Activated CD8-positive, alpha-beta T cell treated with anti-CD3 and anti-CD28 coated beads, Interleukin-2, amount 10 ng/mL, durations not matched to agents 7 days and 5 days (primary cell): ENCODE measurements at regions of chr12 and their contacts with region 1.

Region 1: GRCh38 chr12:120292661-120293531 is at the start of gene RNU4-1:
- DNase-seq: peak; percentile 88
- ATAC-seq: peak; percentile 50
- H3K4me3 Mint-ChIP-seq: no peak within 1 kb of the TSS
- H3K27ac Mint-ChIP-seq: no peak within 1 kb of the TSS
- H3K4me1 Mint-ChIP-seq: peaks cover 5% of the 10 kb centered on the region
- H3K27me3 Mint-ChIP-seq: no peaks in the 10 kb centered on the region
- total RNA-seq, gene RNU4-1: 1,409 to 2,335 TPM

Region 2: GRCh38 chr12:120012067-120012621 is 280.8 kb before region 1 on chr12:
- CTCF ChIA-PET with region 1: no interaction called
- POLR2A ChIA-PET with region 1: interaction called, 16 read pairs
- DNase-seq: peak; percentile 83
- ATAC-seq: peak; percentile 75
- H3K4me3 Mint-ChIP-seq: peak overlapping the region; percentile 19
- H3K27ac Mint-ChIP-seq: peak overlapping the region; percentile 86
- H3K4me1 Mint-ChIP-seq: peaks cover 85% of the 10 kb centered on the region
- H3K27me3 Mint-ChIP-seq: no peaks in the 10 kb centered on the region

Region 3: GRCh38 chr12:120155072-120155471 is 137.8 kb before region 1 on chr12:
- CTCF ChIA-PET with region 1: no interaction called
- POLR2A ChIA-PET with region 1: no interaction called
- DNase-seq: no peak
- ATAC-seq: no peak
- H3K4me3 Mint-ChIP-seq: no peak overlapping the region
- H3K27ac Mint-ChIP-seq: no peak overlapping the region
- H3K4me1 Mint-ChIP-seq: peaks cover 16% of the 10 kb centered on the region
- H3K27me3 Mint-ChIP-seq: no peaks in the 10 kb centered on the region

Region 4: DNA sequence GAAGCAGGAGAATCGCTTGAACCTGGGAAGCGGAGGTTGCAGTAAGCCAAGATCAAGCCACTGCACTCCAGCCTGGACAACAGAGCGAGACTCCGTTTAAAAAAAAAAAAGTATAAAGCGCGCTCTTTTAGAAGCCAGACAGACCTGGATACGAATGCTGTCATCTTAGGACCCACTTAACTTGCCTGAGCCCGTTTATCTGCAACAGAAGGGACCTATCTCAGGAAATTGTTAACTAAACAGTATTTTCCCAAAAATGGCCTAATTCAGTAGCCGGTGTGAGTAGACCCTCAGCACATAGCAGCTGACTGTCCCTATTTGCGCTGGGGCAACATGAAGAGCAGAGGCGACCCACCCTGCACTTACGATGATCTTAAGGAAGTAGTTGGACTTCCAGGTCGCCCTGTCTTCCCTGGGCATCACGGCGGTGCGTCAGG is 92.5 kb before region 1 on chr12:
- CTCF ChIA-PET with region 1: interaction called, 16 read pairs
- POLR2A ChIA-PET with region 1: interaction called, 164 read pairs
- DNase-seq: no peak
- ATAC-seq: no peak
- H3K4me3 Mint-ChIP-seq: peak overlapping the region; percentile 89
- H3K27ac Mint-ChIP-seq: peak overlapping the region; percentile 98
- H3K4me1 Mint-ChIP-seq: peaks cover 46% of the 10 kb centered on the region
- H3K27me3 Mint-ChIP-seq: no peaks in the 10 kb centered on the region

Region 5: DNA sequence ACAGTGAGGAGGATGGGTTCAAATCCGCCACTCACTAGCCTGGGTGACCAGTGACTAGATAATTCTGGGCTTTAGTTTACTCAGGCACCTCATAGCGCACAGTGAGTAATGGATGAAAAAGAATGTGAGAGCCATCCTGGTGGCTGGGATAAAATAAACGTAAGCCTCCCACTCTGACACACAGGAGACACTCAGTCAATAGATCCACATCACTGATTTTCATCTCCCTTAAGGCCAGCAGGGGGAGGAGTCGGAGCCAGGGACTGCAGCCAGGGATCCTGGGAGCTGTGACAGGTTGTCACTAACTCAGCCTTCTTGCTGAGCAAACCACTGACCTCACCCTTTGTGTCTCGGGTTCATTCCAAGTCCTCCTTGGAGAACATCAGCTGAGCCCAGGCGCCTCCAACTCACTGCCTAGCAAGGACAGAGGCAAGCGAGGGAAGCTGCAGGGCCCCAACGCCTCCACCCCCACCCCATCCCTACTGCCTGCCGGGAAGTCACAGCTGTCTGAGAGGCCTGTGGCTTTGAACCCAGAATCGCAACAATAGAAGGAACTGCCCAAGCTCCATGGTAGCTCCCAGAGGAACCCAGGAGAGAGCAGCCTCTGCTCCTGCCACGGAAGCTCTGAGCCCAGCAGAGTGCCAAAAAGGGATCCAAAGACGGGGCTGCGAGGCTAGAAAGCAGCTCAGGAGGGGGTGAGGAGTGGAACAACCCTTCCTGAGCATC is 58.1 kb before region 1 on chr12:
- CTCF ChIA-PET with region 1: interaction called, 89 read pairs
- POLR2A ChIA-PET with region 1: interaction called, 329 read pairs
- DNase-seq: no peak
- ATAC-seq: no peak
- H3K4me3 Mint-ChIP-seq: no peak overlapping the region
- H3K27ac Mint-ChIP-seq: no peak overlapping the region
- H3K4me1 Mint-ChIP-seq: peaks cover 74% of the 10 kb centered on the region
- H3K27me3 Mint-ChIP-seq: no peaks in the 10 kb centered on the region

Region 6: DNA sequence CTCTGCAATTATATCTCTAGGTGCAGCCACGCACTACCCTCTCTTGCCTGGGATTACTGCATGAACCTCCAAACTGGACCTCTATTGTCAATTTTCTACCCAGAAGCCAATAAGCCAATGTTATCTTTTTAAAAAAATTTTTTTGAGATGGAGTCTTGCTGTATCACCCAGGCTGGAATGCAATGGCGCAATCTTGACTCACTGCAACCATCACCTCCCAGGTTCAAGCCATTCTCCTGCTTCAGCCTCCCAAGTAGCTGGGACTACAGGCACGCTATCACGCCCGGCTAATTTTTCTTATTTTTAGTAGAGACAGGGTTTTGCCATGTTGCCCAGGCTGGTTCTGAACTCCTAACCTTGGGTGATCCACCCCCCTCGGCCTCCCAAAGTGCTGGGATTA is 16.2 kb before region 1 on chr12:
- CTCF ChIA-PET with region 1: no interaction called
- POLR2A ChIA-PET with region 1: interaction called, 58 read pairs
- DNase-seq: no peak
- ATAC-seq: no peak
- H3K4me3 Mint-ChIP-seq: no peak overlapping the region
- H3K27ac Mint-ChIP-seq: no peak overlapping the region
- H3K4me1 Mint-ChIP-seq: no peaks in the 10 kb centered on the region
- H3K27me3 Mint-ChIP-seq: no peaks in the 10 kb centered on the region

Region 7: DNA sequence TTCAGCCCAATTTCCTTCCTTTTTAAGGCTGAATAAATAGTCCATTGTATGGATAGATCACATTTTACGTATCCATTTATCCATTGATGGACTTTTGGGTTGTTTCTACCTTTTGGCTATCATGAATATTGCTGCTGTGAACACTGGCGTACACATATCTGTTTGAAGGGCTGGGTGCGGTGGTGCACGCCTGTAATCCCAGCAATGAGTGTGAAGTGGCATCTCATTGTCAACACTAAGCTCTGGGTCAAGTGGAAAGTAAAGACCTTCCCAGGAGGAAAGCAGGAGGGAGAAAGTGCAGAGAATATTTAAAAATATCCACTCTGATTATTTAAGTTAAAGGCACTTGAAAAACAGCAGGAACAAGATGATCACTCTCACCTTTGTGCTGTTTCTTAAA is 46.4 kb after region 1 on chr12:
- CTCF ChIA-PET with region 1: no interaction called
- POLR2A ChIA-PET with region 1: no interaction called
- DNase-seq: no peak
- ATAC-seq: no peak
- H3K4me3 Mint-ChIP-seq: no peak overlapping the region
- H3K27ac Mint-ChIP-seq: no peak overlapping the region
- H3K4me1 Mint-ChIP-seq: no peaks in the 10 kb centered on the region
- H3K27me3 Mint-ChIP-seq: peaks cover 10% of the 10 kb centered on the region

Region 8: DNA sequence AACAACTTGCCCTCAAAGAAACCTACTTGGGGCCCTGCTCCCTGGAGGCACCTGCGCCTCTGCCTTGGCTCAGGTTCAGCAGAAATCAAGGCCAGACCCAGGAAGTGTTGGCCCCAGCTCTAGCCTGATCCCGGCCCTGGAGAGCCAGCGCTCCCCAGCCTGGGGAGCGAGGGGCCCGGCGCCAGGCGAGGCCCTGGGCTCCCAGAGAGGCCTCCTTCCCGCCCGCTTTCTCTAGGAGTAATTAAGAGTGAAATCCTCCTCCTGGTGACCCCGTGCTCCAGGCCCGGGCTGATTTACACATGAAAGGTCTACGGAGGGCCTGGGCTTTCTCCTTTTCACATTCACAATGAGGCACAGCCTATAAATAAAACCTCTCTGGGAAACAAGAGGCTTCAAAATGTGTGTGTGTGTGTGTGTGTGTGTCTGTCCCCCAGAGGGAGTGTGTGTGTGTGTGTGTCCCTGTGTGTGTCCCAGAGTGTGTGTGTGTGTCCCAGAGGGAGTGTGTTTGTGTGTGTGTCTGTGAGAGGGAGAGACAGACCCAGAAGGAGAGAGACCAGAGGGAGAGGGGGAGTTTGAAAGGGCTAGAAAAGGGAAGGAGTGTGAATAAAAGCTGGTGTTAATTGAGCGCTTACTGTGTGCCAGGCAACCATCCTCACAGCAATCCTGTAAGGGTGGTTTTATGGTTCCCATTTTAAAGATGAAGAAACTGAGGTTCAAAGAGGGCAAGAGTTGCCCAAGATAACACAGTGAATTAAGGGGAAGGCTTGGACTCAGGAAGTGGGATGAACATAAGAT is 121.2 kb after region 1 on chr12:
- CTCF ChIA-PET with region 1: no interaction called
- POLR2A ChIA-PET with region 1: no interaction called
- DNase-seq: no peak
- ATAC-seq: no peak
- H3K4me3 Mint-ChIP-seq: no peak overlapping the region
- H3K27ac Mint-ChIP-seq: no peak overlapping the region
- H3K4me1 Mint-ChIP-seq: no peaks in the 10 kb centered on the region
- H3K27me3 Mint-ChIP-seq: peaks cover 11% of the 10 kb centered on the region

Region 9: DNA sequence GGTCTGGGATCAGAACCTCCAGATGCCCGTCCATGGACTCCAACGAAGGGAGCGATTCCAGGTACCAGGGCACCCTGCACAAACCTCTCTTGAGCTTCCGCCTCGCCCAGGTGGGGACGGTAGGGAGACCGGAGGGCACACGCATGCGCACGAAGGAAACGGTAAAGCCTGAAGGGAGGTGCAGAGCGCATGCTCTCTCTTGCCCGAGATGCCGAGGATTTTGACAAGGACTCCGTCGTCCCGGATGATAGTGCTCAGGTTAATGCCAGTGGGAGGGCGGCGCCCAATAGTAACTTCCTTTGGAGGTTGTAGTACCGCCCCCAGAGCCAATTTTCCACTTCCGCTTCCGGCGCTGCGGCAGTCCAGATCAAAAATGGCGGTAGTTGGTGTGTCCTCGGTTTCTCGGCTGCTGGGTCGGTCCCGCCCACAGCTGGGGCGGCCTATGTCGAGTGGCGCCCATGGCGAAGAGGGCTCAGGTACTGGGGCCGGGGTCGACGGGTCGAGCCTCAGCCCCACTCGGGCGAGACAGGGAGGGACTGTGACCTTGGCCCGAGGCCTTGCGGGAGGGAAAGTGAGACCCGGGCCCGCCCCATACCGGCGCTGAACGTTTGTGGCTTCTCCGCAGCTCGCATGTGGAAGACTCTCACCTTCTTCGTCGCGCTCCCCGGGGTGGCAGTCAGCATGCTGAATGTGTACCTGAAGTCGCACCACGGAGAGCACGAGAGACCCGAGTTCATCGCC is 145.0 kb after region 1 on chr12 and contains the start of gene COX6A1:
- CTCF ChIA-PET with region 1: no interaction called
- POLR2A ChIA-PET with region 1: interaction called, 10 read pairs
- DNase-seq: peak; percentile 99
- ATAC-seq: peak; percentile 98
- H3K4me3 Mint-ChIP-seq: peak within 1 kb of the TSS; percentile 83
- H3K27ac Mint-ChIP-seq: peak within 1 kb of the TSS; percentile 92
- H3K4me1 Mint-ChIP-seq: peaks cover 24% of the 10 kb centered on the region
- H3K27me3 Mint-ChIP-seq: no peaks in the 10 kb centered on the region
- total RNA-seq, gene COX6A1: 337 to 351 TPM